Heart left ventricle (tissue), 16 donors: ENCODE measurements at regions of chr2 and their contacts with region 1.

Region 1: GRCh38 chr2:226721541-226721940 is 78.1 kb downstream of the IRS1 start:
- DNase-seq: peak; percentile 24 to 68 (median 53)
- ATAC-seq: peak in 1 of 4 donors; percentile 16
- H3K4me3 ChIP-seq: no peak overlapping the region
- H3K27ac ChIP-seq: no peak overlapping the region
- H3K4me1 ChIP-seq: peaks cover 0 to 37% (median 12%) of the 10 kb centered on the region in 12 donors
- H3K27me3 ChIP-seq: no peaks in the 10 kb centered on the region
- CTCF ChIP-seq: no peak
- POLR2A ChIP-seq: no peak

Region 2: GRCh38 chr2:225697936-225698335 is 1023.6 kb before region 1 on chr2:
- intact Hi-C with region 1: no loop called
- DNase-seq: no peak
- ATAC-seq: no peak
- H3K4me3 ChIP-seq: no peak overlapping the region
- H3K27ac ChIP-seq: no peak overlapping the region
- H3K4me1 ChIP-seq: no peaks in the 10 kb centered on the region
- H3K27me3 ChIP-seq: no peaks in the 10 kb centered on the region
- CTCF ChIP-seq: no peak
- POLR2A ChIP-seq: no peak

Region 3: DNA sequence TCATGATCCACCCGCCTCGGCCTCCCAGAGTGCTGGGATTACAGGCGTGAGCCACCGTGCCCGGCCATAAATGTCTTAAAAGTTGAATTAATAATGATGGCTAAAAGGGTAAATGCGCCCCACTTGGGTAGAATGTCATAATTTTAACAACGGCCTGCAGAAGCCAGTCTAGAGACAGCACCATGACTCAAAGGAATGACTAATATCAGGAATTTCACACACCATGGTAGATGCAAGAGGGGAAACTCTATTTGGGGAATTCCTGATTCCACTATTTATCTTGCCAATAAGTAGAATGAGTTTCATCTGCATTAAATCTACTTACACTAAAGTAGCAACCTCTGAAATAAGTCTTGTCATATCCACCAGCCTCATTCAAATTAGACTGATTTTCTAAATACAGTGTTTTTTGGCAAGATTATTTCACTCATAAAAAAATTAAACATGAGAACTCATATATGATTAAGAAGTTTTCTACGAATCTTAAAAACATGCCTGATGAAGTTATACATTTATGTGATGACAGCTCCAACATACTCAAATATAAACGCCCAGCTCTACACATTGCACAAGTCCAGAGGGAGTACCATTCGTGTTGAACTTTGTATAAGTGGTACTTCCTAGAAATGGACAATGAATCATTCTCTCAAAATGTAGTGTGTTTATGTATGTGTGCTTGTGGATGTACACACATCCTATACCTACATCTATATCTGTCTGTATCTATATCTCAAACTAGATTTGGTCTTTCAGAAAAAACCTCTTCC is 231.6 kb before region 1 on chr2:
- intact Hi-C with region 1: no loop called
- DNase-seq: no peak
- ATAC-seq: no peak
- H3K4me3 ChIP-seq: no peak overlapping the region
- H3K27ac ChIP-seq: no peak overlapping the region
- H3K4me1 ChIP-seq: no peaks in the 10 kb centered on the region
- H3K27me3 ChIP-seq: no peaks in the 10 kb centered on the region
- CTCF ChIP-seq: no peak
- POLR2A ChIP-seq: no peak

Region 4: GRCh38 chr2:226649871-226650660 is 71.5 kb before region 1 on chr2:
- intact Hi-C with region 1: loop called in 1 of 10 experiments (anchors 5 kb)
- DNase-seq: peak in 4 of 5 donors; percentile 66 to 80 (median 76)
- ATAC-seq: peak; percentile 87 to 98 (median 96)
- H3K4me3 ChIP-seq: no peak overlapping the region
- H3K27ac ChIP-seq: peak overlapping the region; percentile 34 to 86 (median 78)
- H3K4me1 ChIP-seq: peaks cover 0 to 33% (median 24%) of the 10 kb centered on the region in 12 donors
- H3K27me3 ChIP-seq: no peaks in the 10 kb centered on the region
- CTCF ChIP-seq: no peak
- POLR2A ChIP-seq: no peak

Region 5: DNA sequence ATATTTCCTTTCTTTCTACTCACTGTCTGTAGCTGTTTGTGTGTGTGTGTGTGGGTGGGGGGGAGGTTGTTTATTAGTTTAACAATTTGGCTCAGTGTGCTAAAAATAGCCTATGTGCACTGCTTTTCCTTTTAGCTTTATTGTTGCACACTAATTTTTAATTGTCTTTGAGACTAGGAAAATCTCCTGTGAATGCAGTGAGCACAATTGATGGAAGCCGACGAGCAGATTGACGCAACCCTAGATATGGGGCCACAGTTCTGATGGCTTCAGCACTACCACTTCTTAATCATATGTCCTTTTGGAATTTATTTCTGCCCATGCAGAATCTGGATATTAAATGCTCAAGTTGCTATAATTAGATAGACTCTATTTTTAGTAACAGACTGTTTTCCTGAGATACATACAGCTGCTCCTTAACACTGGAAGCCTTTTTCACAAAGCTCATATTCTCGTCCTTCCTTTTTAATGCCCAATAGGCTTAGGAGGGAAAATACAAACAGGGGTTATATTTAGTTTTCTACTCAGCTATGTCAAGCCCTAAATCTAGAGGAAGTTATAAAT is 31.0 kb before region 1 on chr2:
- intact Hi-C with region 1: loop called in 1 of 10 experiments (anchors 5 kb)
- DNase-seq: peak in 3 of 5 donors; percentile 37 to 43 (median 39)
- ATAC-seq: peak; percentile 56 to 84 (median 80)
- H3K4me3 ChIP-seq: peak overlapping the region in 6 of 12 donors; percentile 1 to 31 (median 15)
- H3K27ac ChIP-seq: peak overlapping the region in 11 of 12 donors; percentile 11 to 72 (median 69)
- H3K4me1 ChIP-seq: peaks cover 0 to 47% (median 33%) of the 10 kb centered on the region in 12 donors
- H3K27me3 ChIP-seq: no peaks in the 10 kb centered on the region
- CTCF ChIP-seq: no peak
- POLR2A ChIP-seq: no peak